ENCODE measurements at regions of chr6 and their contacts with region 1.

Region 1: DNA sequence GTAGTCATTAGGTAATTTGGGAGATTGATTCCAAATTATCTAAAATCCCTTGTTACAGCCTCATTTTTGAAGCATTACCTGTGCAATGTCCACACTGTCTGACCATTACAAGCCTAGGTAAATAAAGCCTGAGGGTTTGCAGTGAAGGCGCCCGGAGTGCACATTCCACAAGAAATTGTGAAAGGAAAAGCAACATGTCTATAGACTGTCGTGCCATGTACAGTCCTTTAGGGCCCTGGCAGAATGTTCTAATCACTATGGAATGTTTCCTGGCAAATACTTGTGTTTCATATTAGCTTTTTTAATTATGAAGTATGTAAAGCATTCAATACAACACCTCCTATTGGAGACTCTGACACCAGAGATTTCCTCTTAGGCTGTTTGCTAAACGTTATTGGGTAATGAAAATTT is 28.9 kb downstream of the PREP start:
- DNase-seq: no peak
- H3K4me3 ChIP-seq: no peak overlapping the region
- H3K27ac ChIP-seq: peak overlapping the region; percentile 74 to 86 (median 75)
- H3K4me1 ChIP-seq: peaks cover 0 to 38% (median 22%) of the 10 kb centered on the region in 4 donors
- H3K27me3 ChIP-seq: no peaks in the 10 kb centered on the region
- CTCF ChIP-seq: no peak
- EP300 ChIP-seq: no peak
- POLR2A ChIP-seq: no peak

Region 2: DNA sequence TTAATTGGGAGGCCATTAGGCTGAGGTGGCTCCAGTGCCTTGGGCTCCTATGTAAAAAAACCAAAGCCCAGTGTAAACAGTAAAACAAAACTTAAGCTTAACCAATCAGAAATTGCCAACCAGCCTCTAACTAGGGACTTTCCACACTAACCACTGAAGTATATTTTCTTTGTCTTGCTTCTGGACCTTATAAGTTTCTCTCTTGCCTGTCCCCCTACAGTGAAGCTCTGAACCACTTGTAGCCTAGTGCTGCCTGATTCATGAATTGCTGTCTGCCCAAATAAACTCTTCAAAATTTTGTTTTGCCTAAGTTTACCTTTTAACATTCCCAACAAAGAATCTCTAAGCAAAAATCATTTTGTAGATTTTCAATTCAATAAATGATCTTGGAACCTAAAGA is 222.4 kb before region 1 on chr6:
- in situ Hi-C with region 1: no loop called
- intact Hi-C with region 1: no loop called
- DNase-seq: no peak
- H3K4me3 ChIP-seq: no peak overlapping the region
- H3K27ac ChIP-seq: no peak overlapping the region
- H3K4me1 ChIP-seq: no peaks in the 10 kb centered on the region
- H3K27me3 ChIP-seq: no peaks in the 10 kb centered on the region
- CTCF ChIP-seq: no peak
- EP300 ChIP-seq: no peak
- POLR2A ChIP-seq: no peak

Region 3: GRCh38 chr6:105209950-105210706 is 163.9 kb before region 1 on chr6:
- in situ Hi-C with region 1: no loop called
- intact Hi-C with region 1: no loop called
- DNase-seq: no peak
- H3K4me3 ChIP-seq: no peak overlapping the region
- H3K27ac ChIP-seq: no peak overlapping the region
- H3K4me1 ChIP-seq: no peaks in the 10 kb centered on the region
- H3K27me3 ChIP-seq: no peaks in the 10 kb centered on the region
- CTCF ChIP-seq: no peak
- EP300 ChIP-seq: no peak
- POLR2A ChIP-seq: no peak

Region 4: DNA sequence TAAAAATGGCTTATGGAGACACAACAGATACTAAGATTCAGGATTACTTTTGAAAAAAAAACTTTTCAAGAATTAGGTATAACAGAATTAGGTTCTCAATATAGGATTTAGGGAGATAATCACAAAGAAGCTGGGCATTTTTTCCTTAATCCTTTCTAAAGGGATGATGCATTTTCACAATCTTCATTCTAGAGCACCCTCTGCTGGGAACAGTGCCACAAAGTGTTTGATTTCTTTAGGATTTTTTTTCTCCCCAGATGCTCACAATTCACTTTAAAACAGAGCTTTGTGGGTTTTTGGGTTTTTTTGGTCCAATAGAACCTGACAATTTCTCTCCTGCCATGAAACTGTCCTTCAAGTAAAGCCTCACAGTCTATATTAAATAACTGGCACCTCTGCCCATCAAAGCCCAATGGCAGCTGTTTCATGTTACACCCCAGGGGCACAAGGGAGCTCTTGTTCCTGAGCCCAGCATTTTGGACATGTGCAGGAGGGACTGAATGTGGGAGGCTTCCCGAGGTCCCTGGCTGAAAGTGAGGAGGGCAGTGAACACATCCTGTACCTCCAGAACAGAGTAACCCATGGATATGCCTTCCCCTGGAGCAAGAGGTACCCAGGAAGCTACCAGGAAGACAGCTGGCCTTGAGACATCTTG is 10.8 kb before region 1 on chr6:
- in situ Hi-C with region 1: no loop called
- intact Hi-C with region 1: loop called (anchors 1 kb)
- DNase-seq: no peak
- H3K4me3 ChIP-seq: no peak overlapping the region
- H3K27ac ChIP-seq: no peak overlapping the region
- H3K4me1 ChIP-seq: peaks cover 0 to 6% (median 0%) of the 10 kb centered on the region in 4 donors
- H3K27me3 ChIP-seq: no peaks in the 10 kb centered on the region
- CTCF ChIP-seq: peak in 2 of 5 experiments; percentile 17
- EP300 ChIP-seq: no peak
- POLR2A ChIP-seq: no peak

Region 5: GRCh38 chr6:105757512-105758200 is 383.6 kb after region 1 on chr6:
- in situ Hi-C with region 1: no loop called
- intact Hi-C with region 1: no loop called
- DNase-seq: peak; percentile 18
- H3K4me3 ChIP-seq: no peak overlapping the region
- H3K27ac ChIP-seq: no peak overlapping the region
- H3K4me1 ChIP-seq: peaks cover 0 to 38% (median 21%) of the 10 kb centered on the region in 4 donors
- H3K27me3 ChIP-seq: no peaks in the 10 kb centered on the region
- CTCF ChIP-seq: no peak
- EP300 ChIP-seq: no peak
- POLR2A ChIP-seq: no peak